Posterior vena cava (tissue), 2 donors: ENCODE measurements at regions of chr13 and their contacts with region 1.

Region 1: GRCh38 chr13:95834134-95834765 is 157.3 kb downstream of the DNAJC3 start:
- DNase-seq: peak; percentile 85

Region 2: DNA sequence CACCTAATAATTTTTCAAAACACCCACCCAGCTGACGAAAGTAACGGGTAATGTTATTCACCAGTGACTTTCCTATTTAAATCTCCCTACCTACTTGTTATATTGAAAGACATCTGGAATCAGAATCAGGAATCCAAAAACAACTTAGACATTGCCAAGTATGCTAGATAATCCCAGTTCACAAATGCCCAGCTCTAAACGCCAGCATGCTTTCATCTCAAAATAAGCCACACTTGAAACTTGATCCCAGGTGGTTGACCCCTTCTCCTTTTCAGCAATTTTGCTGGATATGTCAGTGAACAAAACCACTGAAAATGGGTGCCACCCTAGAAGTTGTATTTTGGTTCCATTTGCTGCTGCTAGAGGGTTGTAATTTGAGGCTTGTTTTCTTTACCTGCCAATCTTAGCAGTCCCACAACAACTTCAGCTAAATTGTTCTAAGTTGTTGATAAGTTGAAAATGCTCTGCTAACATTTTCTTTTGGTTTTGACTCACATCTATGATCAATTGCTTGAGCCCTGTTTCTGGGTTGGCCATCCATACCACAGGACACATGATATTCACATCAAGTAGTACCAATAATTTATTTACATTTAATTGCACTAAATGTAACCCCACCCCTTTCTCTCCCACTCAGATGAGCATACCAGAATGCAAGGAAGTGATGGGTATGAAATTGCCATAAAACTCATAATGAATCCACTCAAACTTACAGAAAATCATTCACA is 1421.2 kb before region 1 on chr13:
- intact Hi-C with region 1: no loop called
- DNase-seq: no peak

Region 3: GRCh38 chr13:95624020-95624419 is 210.2 kb before region 1 on chr13:
- intact Hi-C with region 1: loop called (anchors 10 kb)
- DNase-seq: no peak